Naive thymus-derived CD4-positive, alpha-beta T cell (primary cell): ENCODE measurements at regions of chr12 and their contacts with region 1.

Region 1: GRCh38 chr12:1533602-1534304 is 60.6 kb downstream of the FBXL14 start:
- DNase-seq: peak in 6 of 9 donors; percentile 12 to 68 (median 30)
- ATAC-seq: peak; percentile 58
- H3K4me3 ChIP-seq: peak overlapping the region; percentile 48
- H3K4me3 Mint-ChIP-seq: peak overlapping the region; percentile 81 to 89 (median 85)
- H3K27ac ChIP-seq: no peak overlapping the region
- H3K27ac Mint-ChIP-seq: peak overlapping the region in 1 of 9 donors; percentile 40
- H3K4me1 ChIP-seq: peaks cover 32 to 34% of the 10 kb centered on the region in 2 donors
- H3K4me1 Mint-ChIP-seq: peaks cover 25 to 38% (median 29%) of the 10 kb centered on the region in 7 donors
- H3K27me3 ChIP-seq: peaks cover 19 to 36% of the 10 kb centered on the region in 2 donors
- H3K27me3 Mint-ChIP-seq: peaks cover 63 to 80% (median 77%) of the 10 kb centered on the region in 5 donors

Region 2: DNA sequence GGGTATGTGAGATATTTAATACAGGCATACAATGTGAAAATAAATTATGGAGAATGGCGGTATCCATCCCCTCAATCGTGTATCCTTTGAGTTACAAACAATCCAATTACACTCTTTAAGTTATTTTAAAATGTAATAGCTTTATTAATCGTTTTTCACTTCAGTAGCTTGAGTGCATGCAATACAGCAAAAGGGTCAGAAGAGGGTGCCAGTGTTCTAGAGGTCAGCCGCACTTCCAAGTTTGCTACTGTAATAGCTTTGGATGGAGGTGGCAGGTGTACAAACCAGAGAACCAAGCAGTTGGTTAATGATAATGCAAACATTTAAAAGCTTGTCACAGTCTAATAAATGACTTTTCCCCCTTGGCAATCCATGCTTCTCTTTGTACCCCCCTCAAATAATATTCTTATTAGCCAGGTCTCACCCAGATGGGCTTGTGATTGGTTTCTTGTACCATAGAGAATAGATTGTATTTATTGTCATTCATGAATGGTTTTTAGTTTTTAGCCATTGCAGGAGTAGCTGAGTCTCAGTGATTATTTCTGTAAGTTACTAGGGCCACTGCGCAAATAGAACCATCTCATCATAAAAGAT is 415.7 kb before region 1 on chr12:
- CTCF ChIA-PET with region 1: interaction called, 10 read pairs
- POLR2A ChIA-PET with region 1: no interaction called
- intact Hi-C with region 1: no loop called
- DNase-seq: peak; percentile 25 to 70 (median 63)
- ATAC-seq: peak; percentile 74
- H3K4me3 ChIP-seq: no peak overlapping the region
- H3K4me3 Mint-ChIP-seq: no peak overlapping the region
- H3K27ac ChIP-seq: no peak overlapping the region
- H3K27ac Mint-ChIP-seq: no peak overlapping the region
- H3K4me1 ChIP-seq: peaks cover 4 to 7% of the 10 kb centered on the region in 2 donors
- H3K4me1 Mint-ChIP-seq: peaks cover 7 to 16% (median 9%) of the 10 kb centered on the region in 7 donors
- H3K27me3 ChIP-seq: no peaks in the 10 kb centered on the region
- H3K27me3 Mint-ChIP-seq: no peaks in the 10 kb centered on the region

Region 3: GRCh38 chr12:1473418-1473817 is 60.3 kb before region 1 on chr12:
- CTCF ChIA-PET with region 1: no interaction called
- POLR2A ChIA-PET with region 1: no interaction called
- intact Hi-C with region 1: loop called in 1 of 2 experiments (anchors 1 kb)
- DNase-seq: peak in 8 of 9 donors; percentile 13 to 49 (median 39)
- ATAC-seq: peak; percentile 81
- H3K4me3 ChIP-seq: no peak overlapping the region
- H3K4me3 Mint-ChIP-seq: peak overlapping the region in 4 of 10 donors; percentile 52 to 77 (median 64)
- H3K27ac ChIP-seq: no peak overlapping the region
- H3K27ac Mint-ChIP-seq: peak overlapping the region in 3 of 9 donors; percentile 55 to 88 (median 71)
- H3K4me1 ChIP-seq: peaks cover 8 to 12% of the 10 kb centered on the region in 2 donors
- H3K4me1 Mint-ChIP-seq: peaks cover 0 to 19% (median 10%) of the 10 kb centered on the region in 7 donors
- H3K27me3 ChIP-seq: no peaks in the 10 kb centered on the region
- H3K27me3 Mint-ChIP-seq: no peaks in the 10 kb centered on the region

Region 4: GRCh38 chr12:1488908-1489381 is 44.8 kb before region 1 on chr12:
- CTCF ChIA-PET with region 1: no interaction called
- POLR2A ChIA-PET with region 1: no interaction called
- intact Hi-C with region 1: loop called in 1 of 2 experiments (anchors 5 kb)
- DNase-seq: peak in 7 of 9 donors; percentile 28 to 72 (median 61)
- ATAC-seq: peak; percentile 80
- H3K4me3 ChIP-seq: no peak overlapping the region
- H3K4me3 Mint-ChIP-seq: peak overlapping the region; percentile 49 to 83 (median 68)
- H3K27ac ChIP-seq: peak overlapping the region; percentile 65
- H3K27ac Mint-ChIP-seq: peak overlapping the region; percentile 43 to 97 (median 95)
- H3K4me1 ChIP-seq: peaks cover 0 to 23% of the 10 kb centered on the region in 2 donors
- H3K4me1 Mint-ChIP-seq: peaks cover 12 to 46% (median 33%) of the 10 kb centered on the region in 7 donors
- H3K27me3 ChIP-seq: no peaks in the 10 kb centered on the region
- H3K27me3 Mint-ChIP-seq: no peaks in the 10 kb centered on the region